B cell (primary cell): ENCODE measurements at regions of chr12 and their contacts with region 1.

Region 1: DNA sequence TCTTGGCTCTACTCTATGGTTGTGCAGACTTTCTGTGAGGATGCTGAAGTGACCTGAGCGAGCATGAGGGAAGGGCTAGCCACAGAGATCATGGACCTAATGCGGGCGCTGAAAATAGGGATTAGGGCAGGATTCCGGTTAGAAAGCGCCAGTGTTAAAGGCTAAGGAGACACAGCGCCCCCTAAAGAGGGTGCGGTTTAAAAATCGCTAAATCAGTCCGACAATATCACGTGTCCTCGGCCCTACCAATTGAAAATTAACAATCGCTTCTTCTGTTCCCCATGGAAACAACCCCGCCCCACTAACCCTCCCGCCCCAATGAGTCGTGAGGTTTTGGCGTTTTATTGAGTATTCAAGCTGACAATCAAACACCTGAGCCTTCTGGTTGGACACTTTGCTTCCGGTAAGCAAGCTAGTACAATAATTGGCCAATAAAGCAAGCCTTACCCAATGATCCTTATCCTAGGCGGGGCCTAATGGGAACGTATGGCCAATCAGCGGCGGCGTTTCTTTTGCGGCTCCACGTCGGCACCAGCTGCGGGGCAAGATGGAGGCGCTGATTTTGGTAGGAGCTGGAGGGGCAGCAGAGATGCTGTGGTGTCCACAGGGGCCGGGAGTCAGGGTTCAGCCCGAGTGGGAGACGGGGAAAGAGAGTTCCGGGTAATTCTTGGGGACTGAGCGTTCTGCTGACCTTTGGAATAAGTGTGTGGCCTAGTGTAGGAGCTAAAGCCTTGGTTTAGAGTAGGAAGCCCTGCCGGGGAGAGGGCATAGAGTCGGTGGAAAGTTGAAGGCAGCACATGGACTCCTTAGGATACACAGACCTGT is at the start of gene COPZ1:
- DNase-seq: peak; percentile 97
- ATAC-seq: peak; percentile 93
- H3K4me3 ChIP-seq: peak within 1 kb of the TSS; percentile 54 to 97 (median 87)
- H3K4me3 Mint-ChIP-seq: peak within 1 kb of the TSS; percentile 94
- H3K27ac ChIP-seq: peak within 1 kb of the TSS; percentile 76 to 89
- H3K27ac Mint-ChIP-seq: peak within 1 kb of the TSS; percentile 96
- H3K4me1 ChIP-seq: peaks cover 9 to 11% of the 10 kb centered on the region in 2 donors
- H3K4me1 Mint-ChIP-seq: peaks cover 30% of the 10 kb centered on the region
- H3K27me3 ChIP-seq: no peaks in the 10 kb centered on the region
- H3K27me3 Mint-ChIP-seq: no peaks in the 10 kb centered on the region
- CTCF ChIP-seq: peak; percentile 85
- total RNA-seq, gene COPZ1: 72.1 and 78.2 TPM in 2 replicates

Region 2: DNA sequence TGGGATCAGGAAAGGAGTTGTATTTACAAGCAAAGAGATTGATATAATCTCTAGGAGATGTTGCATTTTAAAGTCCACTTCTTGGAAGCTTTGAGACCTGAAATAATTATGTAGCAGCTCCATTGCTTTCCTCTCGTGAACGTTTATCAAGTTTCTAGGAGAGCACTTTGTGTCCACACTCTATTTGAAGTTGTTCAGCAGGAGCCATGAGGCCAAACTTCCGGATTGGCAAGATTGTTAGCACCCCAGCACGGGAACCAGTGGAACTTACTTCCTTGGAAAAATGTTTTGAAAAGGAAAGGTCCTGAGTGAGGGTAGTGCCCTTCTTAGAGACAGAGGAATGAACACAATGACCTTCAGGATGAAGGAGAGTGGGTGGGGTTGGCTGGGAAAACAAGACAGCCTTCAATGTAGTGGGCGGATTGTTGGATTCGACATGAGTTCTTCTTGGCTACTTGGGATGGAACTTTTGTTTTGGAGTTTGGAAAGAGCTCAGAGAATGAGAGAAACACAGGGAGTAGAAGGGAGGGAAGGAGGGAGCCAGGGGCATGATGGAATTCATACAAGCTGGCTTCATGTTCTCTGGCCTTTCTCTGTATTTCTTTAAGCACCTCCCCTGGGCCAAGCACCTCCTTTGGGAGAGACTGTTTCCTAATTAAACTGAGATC is 549.2 kb before region 1 on chr12:
- CTCF ChIA-PET with region 1: no interaction called
- POLR2A ChIA-PET with region 1: no interaction called
- intact Hi-C with region 1: no loop called
- DNase-seq: no peak
- ATAC-seq: no peak
- H3K4me3 ChIP-seq: no peak overlapping the region
- H3K4me3 Mint-ChIP-seq: no peak overlapping the region
- H3K27ac ChIP-seq: no peak overlapping the region
- H3K27ac Mint-ChIP-seq: no peak overlapping the region
- H3K4me1 ChIP-seq: no peaks in the 10 kb centered on the region
- H3K4me1 Mint-ChIP-seq: no peaks in the 10 kb centered on the region
- H3K27me3 ChIP-seq: peaks cover 0 to 14% (median 5%) of the 10 kb centered on the region in 4 experiments
- H3K27me3 Mint-ChIP-seq: peaks cover 18% of the 10 kb centered on the region
- CTCF ChIP-seq: no peak

Region 3: GRCh38 chr12:54191550-54192022 is 133.2 kb before region 1 on chr12:
- CTCF ChIA-PET with region 1: interaction called, 3 read pairs
- POLR2A ChIA-PET with region 1: no interaction called
- intact Hi-C with region 1: loop called (anchors 1 kb)
- DNase-seq: peak; percentile 90
- ATAC-seq: peak; percentile 64
- H3K4me3 ChIP-seq: no peak overlapping the region
- H3K4me3 Mint-ChIP-seq: no peak overlapping the region
- H3K27ac ChIP-seq: no peak overlapping the region
- H3K27ac Mint-ChIP-seq: peak overlapping the region; percentile 61
- H3K4me1 ChIP-seq: peaks cover 27 to 42% of the 10 kb centered on the region in 2 donors
- H3K4me1 Mint-ChIP-seq: peaks cover 41% of the 10 kb centered on the region
- H3K27me3 ChIP-seq: peaks cover 0 to 42% (median 12%) of the 10 kb centered on the region in 4 experiments
- H3K27me3 Mint-ChIP-seq: peaks cover 35% of the 10 kb centered on the region
- CTCF ChIP-seq: peak; percentile 77

Region 4: DNA sequence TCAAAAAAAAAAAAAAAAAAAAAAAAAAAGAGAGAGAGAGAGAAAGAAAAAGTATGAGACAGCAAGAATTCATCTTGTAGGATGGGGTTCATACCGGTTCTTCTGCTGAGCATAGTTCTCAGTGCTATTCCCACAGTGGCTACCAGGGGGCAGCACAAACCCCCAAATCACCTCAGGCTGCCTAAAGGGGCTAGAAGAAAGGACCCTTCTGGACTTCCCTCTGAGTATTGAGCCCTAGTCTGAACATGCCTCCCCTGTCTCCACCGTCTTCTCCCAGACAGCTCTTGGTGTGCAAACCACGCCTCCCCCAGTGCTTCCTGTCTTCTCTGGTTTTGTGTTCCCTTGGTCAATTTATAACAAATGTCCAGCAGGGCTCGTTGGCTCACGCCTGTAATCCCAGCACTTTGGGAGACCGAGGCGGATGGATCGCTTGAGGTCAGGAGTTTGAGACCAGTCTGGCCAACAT is 104.7 kb before region 1 on chr12:
- CTCF ChIA-PET with region 1: interaction called, 11 read pairs
- POLR2A ChIA-PET with region 1: interaction called, 13 read pairs
- intact Hi-C with region 1: loop called (anchors 2 kb)
- DNase-seq: peak; percentile 81
- ATAC-seq: peak; percentile 40
- H3K4me3 ChIP-seq: no peak overlapping the region
- H3K4me3 Mint-ChIP-seq: no peak overlapping the region
- H3K27ac ChIP-seq: no peak overlapping the region
- H3K27ac Mint-ChIP-seq: no peak overlapping the region
- H3K4me1 ChIP-seq: peaks cover 30 to 35% of the 10 kb centered on the region in 2 donors
- H3K4me1 Mint-ChIP-seq: peaks cover 34% of the 10 kb centered on the region
- H3K27me3 ChIP-seq: peaks cover 0 to 6% (median 0%) of the 10 kb centered on the region in 4 experiments
- H3K27me3 Mint-ChIP-seq: no peaks in the 10 kb centered on the region
- CTCF ChIP-seq: peak; percentile 77

Region 5: DNA sequence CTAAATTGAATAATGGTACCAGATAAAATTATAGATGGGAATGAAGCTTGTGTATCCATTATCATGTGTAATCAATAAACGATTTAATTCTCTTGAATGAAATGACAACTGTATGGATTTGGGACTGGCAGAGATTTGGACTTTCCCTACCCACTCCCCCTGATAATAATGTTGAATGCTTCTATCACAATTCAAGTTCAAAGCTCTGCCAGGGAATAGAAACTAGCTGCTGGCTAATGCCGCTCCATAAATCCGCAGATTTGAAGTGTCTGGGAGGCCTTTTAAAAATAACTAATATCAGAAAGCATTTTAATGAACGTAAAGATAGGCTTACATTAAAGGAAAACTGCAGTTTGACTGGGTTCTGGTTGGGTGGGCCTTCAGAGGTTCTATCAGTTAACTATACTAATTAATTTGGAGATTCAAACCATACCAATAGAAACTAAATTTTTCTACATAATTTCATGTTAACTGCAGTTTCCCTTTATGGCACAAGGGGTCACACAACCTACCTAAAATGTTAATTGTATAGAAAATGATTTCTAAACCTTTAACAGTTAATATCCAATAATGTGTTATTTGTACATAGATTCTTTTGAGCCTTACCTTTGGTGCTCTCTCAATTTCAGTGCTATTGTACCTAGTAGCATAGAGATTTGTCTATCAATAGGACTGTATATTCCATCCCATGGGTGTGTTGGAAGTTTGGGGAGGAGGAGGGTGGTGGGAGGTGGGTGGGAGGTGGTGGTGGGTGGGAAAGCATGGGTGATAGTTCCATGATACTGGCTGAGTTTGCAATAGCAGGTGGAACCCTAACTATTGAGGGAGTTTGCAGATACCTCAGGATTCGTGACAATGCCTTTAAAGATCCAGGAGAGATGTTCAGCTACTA is 39.4 kb before region 1 on chr12:
- CTCF ChIA-PET with region 1: interaction called, 22 read pairs
- POLR2A ChIA-PET with region 1: interaction called, 23 read pairs
- intact Hi-C with region 1: no loop called
- DNase-seq: no peak
- ATAC-seq: no peak
- H3K4me3 ChIP-seq: no peak overlapping the region
- H3K4me3 Mint-ChIP-seq: peak overlapping the region; percentile 5
- H3K27ac ChIP-seq: peak overlapping the region in 1 of 2 donors; percentile 17
- H3K27ac Mint-ChIP-seq: no peak overlapping the region
- H3K4me1 ChIP-seq: peaks cover 51 to 59% of the 10 kb centered on the region in 2 donors
- H3K4me1 Mint-ChIP-seq: peaks cover 64% of the 10 kb centered on the region
- H3K27me3 ChIP-seq: no peaks in the 10 kb centered on the region
- H3K27me3 Mint-ChIP-seq: no peaks in the 10 kb centered on the region
- CTCF ChIP-seq: peak; percentile 57

Region 6: DNA sequence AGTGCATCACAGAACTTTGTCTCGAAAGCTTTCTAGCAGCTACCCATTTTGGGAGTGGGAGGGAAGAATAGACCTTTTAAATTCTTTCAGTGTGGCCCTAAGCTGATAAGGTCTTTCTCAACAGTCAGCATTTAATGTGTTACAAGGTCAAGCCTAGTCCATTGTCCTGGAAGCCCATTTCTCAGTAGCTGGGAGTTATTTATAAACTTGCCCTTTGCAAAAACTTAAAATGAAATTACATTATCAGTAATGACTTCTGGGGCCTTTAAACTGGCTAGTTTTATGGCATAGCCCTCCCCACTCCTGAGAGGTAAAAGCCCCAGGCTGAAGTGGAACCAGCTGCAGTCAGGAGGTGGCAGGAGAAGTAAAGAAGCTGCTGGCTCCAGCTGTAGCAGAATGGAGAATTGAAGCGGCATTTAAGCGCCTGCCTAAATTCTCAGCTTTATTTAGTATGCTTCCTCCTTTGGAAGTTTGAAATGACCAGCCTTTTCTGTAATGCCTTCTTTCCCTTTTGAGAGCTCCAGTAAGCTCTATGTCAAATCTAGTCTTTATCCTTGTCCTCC is 12.5 kb after region 1 on chr12:
- CTCF ChIA-PET with region 1: interaction called, 44 read pairs
- POLR2A ChIA-PET with region 1: interaction called, 3 read pairs
- intact Hi-C with region 1: no loop called
- DNase-seq: no peak
- ATAC-seq: no peak
- H3K4me3 ChIP-seq: no peak overlapping the region
- H3K4me3 Mint-ChIP-seq: no peak overlapping the region
- H3K27ac ChIP-seq: no peak overlapping the region
- H3K27ac Mint-ChIP-seq: no peak overlapping the region
- H3K4me1 ChIP-seq: no peaks in the 10 kb centered on the region
- H3K4me1 Mint-ChIP-seq: peaks cover 11% of the 10 kb centered on the region
- H3K27me3 ChIP-seq: no peaks in the 10 kb centered on the region
- H3K27me3 Mint-ChIP-seq: no peaks in the 10 kb centered on the region
- CTCF ChIP-seq: no peak

Region 7: DNA sequence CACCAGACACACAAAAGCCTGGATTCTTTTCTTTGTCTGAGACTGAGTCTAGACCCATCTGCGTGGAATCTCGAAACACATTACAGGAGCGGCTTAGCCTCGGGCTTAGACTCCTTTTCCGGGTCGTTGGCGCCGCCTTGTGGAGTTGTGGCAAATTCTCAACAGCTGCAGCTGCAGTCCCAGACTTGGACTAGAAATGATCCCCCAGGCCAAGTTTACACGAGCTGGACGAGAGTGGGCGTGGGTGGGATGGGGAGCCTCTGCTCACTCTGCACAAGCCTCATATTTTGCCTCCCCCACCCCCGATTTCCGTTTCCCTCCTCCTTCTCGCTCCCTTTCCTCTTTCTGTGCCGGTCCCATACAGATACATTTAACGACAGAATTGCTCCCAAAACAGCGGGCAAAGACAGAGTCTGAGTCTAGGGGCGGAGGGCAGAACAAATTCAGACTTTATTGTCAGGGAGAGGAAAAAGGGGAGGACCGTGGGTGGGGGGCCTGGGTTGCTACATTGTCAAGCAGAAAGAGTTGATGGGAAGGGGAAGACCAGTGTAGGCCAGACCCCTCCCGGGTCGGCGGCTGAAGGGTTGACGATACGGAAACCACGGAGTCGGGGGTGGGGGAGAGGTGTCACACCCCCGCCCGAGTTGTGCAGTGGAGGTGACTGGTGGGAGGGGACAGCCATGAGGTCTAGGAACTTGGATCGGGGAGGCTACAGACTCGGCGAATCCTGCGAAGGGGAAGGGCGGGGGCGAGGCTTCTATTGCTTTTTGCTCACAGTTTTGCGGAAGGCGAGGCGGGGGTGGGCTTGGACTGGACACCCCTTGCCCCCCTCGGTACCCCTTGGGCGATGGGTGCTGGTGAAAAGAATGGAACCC is 44.1 kb after region 1 on chr12:
- CTCF ChIA-PET with region 1: interaction called, 4 read pairs
- POLR2A ChIA-PET with region 1: no interaction called
- intact Hi-C with region 1: loop called (anchors 2 kb)
- DNase-seq: peak; percentile 88
- ATAC-seq: peak; percentile 94
- H3K4me3 ChIP-seq: peak overlapping the region in 2 of 5 experiments; percentile 35 to 38
- H3K4me3 Mint-ChIP-seq: peak overlapping the region; percentile 69
- H3K27ac ChIP-seq: no peak overlapping the region
- H3K27ac Mint-ChIP-seq: peak overlapping the region; percentile 68
- H3K4me1 ChIP-seq: peaks cover 10 to 25% of the 10 kb centered on the region in 2 donors
- H3K4me1 Mint-ChIP-seq: peaks cover 21% of the 10 kb centered on the region
- H3K27me3 ChIP-seq: no peaks in the 10 kb centered on the region
- H3K27me3 Mint-ChIP-seq: no peaks in the 10 kb centered on the region
- CTCF ChIP-seq: peak; percentile 81